Activated CD4-positive, alpha-beta memory T cell treated with anti-CD3 and anti-CD28 coated beads for 36 hours (primary cell): ENCODE measurements at regions of chr1 and their contacts with region 1.

Region 1: GRCh38 chr1:77683160-77684148 is 996 bp upstream of the ZZZ3 start:
- DNase-seq: peak; percentile 95
- H3K4me3 Mint-ChIP-seq: peak overlapping the region; percentile 98
- H3K27ac Mint-ChIP-seq: peak overlapping the region; percentile 90
- H3K4me1 Mint-ChIP-seq: peaks cover 32% of the 10 kb centered on the region
- H3K27me3 Mint-ChIP-seq: no peaks in the 10 kb centered on the region

Region 2: GRCh38 chr1:77060000-77060399 is 623.5 kb before region 1 on chr1:
- CTCF ChIA-PET with region 1: no interaction called
- POLR2A ChIA-PET with region 1: no interaction called
- intact Hi-C with region 1: no loop called
- DNase-seq: no peak
- H3K4me3 Mint-ChIP-seq: no peak overlapping the region
- H3K27ac Mint-ChIP-seq: no peak overlapping the region
- H3K4me1 Mint-ChIP-seq: no peaks in the 10 kb centered on the region
- H3K27me3 Mint-ChIP-seq: no peaks in the 10 kb centered on the region

Region 3: GRCh38 chr1:77219166-77219887 is 464.1 kb before region 1 on chr1 and contains the start of gene PIGK:
- CTCF ChIA-PET with region 1: no interaction called
- POLR2A ChIA-PET with region 1: no interaction called
- intact Hi-C with region 1: loop called (anchors 2 kb)
- DNase-seq: peak; percentile 94
- H3K4me3 Mint-ChIP-seq: peak within 1 kb of the TSS; percentile 93
- H3K27ac Mint-ChIP-seq: peak within 1 kb of the TSS; percentile 89
- H3K4me1 Mint-ChIP-seq: peaks cover 38% of the 10 kb centered on the region
- H3K27me3 Mint-ChIP-seq: no peaks in the 10 kb centered on the region
- total RNA-seq, gene PIGK: 23.9 to 26.5 TPM

Region 4: GRCh38 chr1:77582905-77583304 is 100.5 kb before region 1 on chr1:
- CTCF ChIA-PET with region 1: interaction called, 6 read pairs
- POLR2A ChIA-PET with region 1: interaction called, 3 read pairs
- intact Hi-C with region 1: loop called (anchors 2 kb)
- DNase-seq: no peak
- H3K4me3 Mint-ChIP-seq: no peak overlapping the region
- H3K27ac Mint-ChIP-seq: no peak overlapping the region
- H3K4me1 Mint-ChIP-seq: peaks cover 8% of the 10 kb centered on the region
- H3K27me3 Mint-ChIP-seq: no peaks in the 10 kb centered on the region

Region 5: GRCh38 chr1:77759071-77760028 is 75.9 kb after region 1 on chr1 and contains the start of gene USP33:
- CTCF ChIA-PET with region 1: interaction called, 3 read pairs
- POLR2A ChIA-PET with region 1: interaction called, 8 read pairs
- intact Hi-C with region 1: loop called (anchors 1 kb)
- DNase-seq: peak; percentile 95
- H3K4me3 Mint-ChIP-seq: peak within 1 kb of the TSS; percentile 96
- H3K27ac Mint-ChIP-seq: peak within 1 kb of the TSS; percentile 94
- H3K4me1 Mint-ChIP-seq: peaks cover 47% of the 10 kb centered on the region
- H3K27me3 Mint-ChIP-seq: no peaks in the 10 kb centered on the region
- total RNA-seq, gene USP33: 37.7 to 41.0 TPM

Region 6: GRCh38 chr1:78004719-78005447 is 321.4 kb after region 1 on chr1 and contains the start of gene DNAJB4:
- CTCF ChIA-PET with region 1: interaction called, 9 read pairs
- POLR2A ChIA-PET with region 1: interaction called, 12 read pairs
- intact Hi-C with region 1: loop called (anchors 1 kb)
- DNase-seq: peak; percentile 70
- H3K4me3 Mint-ChIP-seq: peak within 1 kb of the TSS; percentile 87
- H3K27ac Mint-ChIP-seq: peak within 1 kb of the TSS; percentile 100
- H3K4me1 Mint-ChIP-seq: peaks cover 38% of the 10 kb centered on the region
- H3K27me3 Mint-ChIP-seq: peaks cover 3% of the 10 kb centered on the region
- total RNA-seq, gene DNAJB4: 9.1 to 10.8 TPM

Region 7: DNA sequence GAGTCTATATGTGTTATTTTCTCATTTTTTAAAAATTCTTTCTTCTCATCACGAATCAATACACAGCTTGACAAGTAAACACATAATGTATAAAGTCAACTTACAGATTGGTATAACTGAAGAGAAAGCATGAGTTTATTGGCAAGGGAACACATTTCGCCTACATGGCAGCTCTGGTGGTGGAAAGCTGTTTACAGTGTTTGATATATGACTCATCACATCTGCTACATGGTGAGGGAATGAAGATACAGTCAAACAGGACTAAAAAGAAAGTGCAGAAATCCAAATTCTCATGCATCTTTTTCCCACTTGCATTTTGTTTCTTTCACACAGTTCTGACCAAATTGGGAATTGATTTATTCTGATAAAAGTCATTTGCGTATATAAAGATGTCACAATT is 1445.3 kb after region 1 on chr1:
- CTCF ChIA-PET with region 1: no interaction called
- POLR2A ChIA-PET with region 1: no interaction called
- intact Hi-C with region 1: no loop called
- DNase-seq: no peak
- H3K4me3 Mint-ChIP-seq: no peak overlapping the region
- H3K27ac Mint-ChIP-seq: no peak overlapping the region
- H3K4me1 Mint-ChIP-seq: no peaks in the 10 kb centered on the region
- H3K27me3 Mint-ChIP-seq: no peaks in the 10 kb centered on the region